H1 (cell line): ENCODE measurements at regions of chr11 and their contacts with region 1.

Region 1: DNA sequence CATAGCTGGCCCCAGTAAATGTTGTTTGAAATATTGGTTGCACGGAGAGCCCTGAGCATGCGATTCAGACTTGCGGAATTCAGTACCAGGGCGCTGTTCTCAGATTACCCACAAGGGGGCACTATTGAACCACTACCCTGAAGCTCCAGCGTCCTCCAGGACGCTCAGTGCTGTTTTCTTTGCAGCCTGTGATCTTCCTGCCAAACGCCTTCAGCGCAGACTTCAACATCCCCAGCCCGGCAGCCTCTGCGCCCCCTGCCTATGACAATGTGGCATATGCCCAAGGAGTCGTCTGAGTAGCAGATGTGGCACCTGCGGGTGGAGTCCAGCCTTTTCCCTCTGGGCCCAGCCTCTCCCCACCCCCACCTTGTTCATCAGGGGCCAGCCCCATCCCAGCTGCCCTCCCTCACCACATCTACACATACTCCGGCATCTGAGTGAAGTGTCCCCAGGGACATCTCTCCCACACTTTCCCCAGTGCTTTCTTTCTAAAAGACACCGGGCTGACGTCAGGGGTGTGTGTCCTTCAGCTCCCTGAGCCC is 9.6 kb upstream of the MS4A10 start:
- DNase-seq: peak; percentile 90 to 94
- H3K4me3 ChIP-seq: no peak overlapping the region
- H3K27ac ChIP-seq: no peak overlapping the region
- H3K4me1 ChIP-seq: no peaks in the 10 kb centered on the region; a peak in 1 of 7 replicates
- H3K27me3 ChIP-seq: no peaks in the 10 kb centered on the region
- CTCF ChIP-seq: peak; percentile 65 to 96 (median 93)
- EP300 ChIP-seq: no peak
- POLR2A ChIP-seq: no peak
- RAD21 ChIP-seq: peak; percentile 81 to 86

Region 2: GRCh38 chr11:60786811-60787567 is 11.5 kb after region 1 on chr11:
- CTCF ChIA-PET with region 1: interaction called, 11 read pairs
- POLR2A ChIA-PET with region 1: interaction called, 4 read pairs
- DNase-seq: no peak
- H3K4me3 ChIP-seq: no peak overlapping the region
- H3K27ac ChIP-seq: no peak overlapping the region
- H3K4me1 ChIP-seq: no peaks in the 10 kb centered on the region; a peak in 1 of 7 replicates
- H3K27me3 ChIP-seq: no peaks in the 10 kb centered on the region; a peak in 1 of 7 replicates
- CTCF ChIP-seq: no peak
- EP300 ChIP-seq: no peak
- POLR2A ChIP-seq: no peak
- RAD21 ChIP-seq: no peak

Region 3: DNA sequence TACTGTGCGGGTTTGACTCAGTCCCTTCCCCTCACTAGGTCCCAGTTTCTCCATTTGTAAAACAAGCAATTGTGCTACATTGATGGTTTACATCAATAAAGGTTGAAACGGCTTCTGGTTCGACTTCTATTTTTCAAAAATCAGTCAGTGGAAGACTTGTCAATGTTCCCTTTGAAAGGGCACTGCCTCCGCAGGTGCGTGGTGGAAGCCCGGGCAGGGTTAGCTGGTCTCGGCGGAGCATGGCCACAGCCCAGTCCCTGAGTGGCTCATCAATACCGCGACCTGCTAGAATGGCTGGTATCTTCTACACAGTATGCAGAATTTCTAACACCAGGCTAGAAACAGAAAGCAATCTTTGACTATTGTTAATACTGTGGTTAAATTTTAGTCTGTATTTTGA is 25.7 kb after region 1 on chr11:
- CTCF ChIA-PET with region 1: interaction called, 11 read pairs
- POLR2A ChIA-PET with region 1: no interaction called
- DNase-seq: no peak
- H3K4me3 ChIP-seq: no peak overlapping the region
- H3K27ac ChIP-seq: no peak overlapping the region
- H3K4me1 ChIP-seq: no peaks in the 10 kb centered on the region
- H3K27me3 ChIP-seq: peaks cover 0 to 3% (median 0%) of the 10 kb centered on the region in 4 experiments; a peak in 1 of 7 replicates
- CTCF ChIP-seq: peak in 1 of 3 experiments; percentile 3; a peak in 1 of 4 replicates
- EP300 ChIP-seq: no peak
- POLR2A ChIP-seq: no peak
- RAD21 ChIP-seq: no peak

Region 4: DNA sequence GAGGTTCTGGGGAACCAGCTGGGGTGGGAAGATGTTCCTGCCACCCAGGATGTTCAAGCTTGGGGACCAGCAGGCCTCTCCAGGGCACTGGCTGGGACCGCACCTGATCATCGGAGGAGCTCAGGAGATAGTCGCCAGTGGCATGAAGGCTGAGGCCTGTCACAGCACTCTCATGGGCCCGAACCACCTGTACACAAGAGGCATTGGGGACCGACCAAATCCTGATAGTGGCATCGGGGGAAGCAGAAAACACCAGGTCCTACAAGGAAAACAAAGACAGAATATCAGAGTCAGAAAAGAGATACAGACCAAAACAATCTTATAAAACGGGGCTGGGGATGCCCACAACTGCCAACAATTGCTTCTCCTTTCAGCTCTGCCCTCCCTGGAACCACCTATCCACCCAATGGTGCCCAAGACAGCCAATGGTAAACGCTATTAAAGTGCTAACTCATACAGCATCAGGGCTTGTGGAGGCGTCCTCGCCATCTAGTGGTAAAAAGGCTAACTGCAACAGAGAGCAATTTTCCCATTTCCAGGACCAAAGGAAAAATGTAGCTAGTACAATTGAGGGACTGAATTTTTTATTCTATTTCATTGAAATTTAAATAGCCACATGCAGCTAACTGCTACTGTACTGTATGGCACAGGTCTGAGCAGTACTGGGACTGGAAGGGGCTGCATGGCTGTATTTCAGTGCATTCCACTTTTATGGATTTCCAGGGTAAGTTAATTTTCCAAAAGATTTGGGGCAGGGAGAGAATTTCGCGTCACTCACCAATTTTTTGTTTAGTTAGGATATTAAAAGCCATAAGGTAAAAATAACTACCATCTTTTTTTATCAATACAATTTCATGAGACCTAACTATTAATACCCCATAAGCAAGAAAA is 123.8 kb after region 1 on chr11:
- CTCF ChIA-PET with region 1: interaction called, 14 read pairs
- POLR2A ChIA-PET with region 1: no interaction called
- DNase-seq: peak in 1 of 2 experiments; percentile 57
- H3K4me3 ChIP-seq: no peak overlapping the region
- H3K27ac ChIP-seq: 0 out of 2 replicates have a peak overlapping the region, but pooled peaks have one; percentile 42
- H3K4me1 ChIP-seq: peaks cover 0 to under 1% (median 0%) of the 10 kb centered on the region in 4 experiments; a peak in 1 of 7 replicates
- H3K27me3 ChIP-seq: no peaks in the 10 kb centered on the region
- CTCF ChIP-seq: peak; percentile 21 to 91 (median 74)
- EP300 ChIP-seq: no peak
- POLR2A ChIP-seq: no peak
- RAD21 ChIP-seq: peak; percentile 57 to 68